ENCODE measurements at regions of chr17 and their contacts with region 1.

Region 1: DNA sequence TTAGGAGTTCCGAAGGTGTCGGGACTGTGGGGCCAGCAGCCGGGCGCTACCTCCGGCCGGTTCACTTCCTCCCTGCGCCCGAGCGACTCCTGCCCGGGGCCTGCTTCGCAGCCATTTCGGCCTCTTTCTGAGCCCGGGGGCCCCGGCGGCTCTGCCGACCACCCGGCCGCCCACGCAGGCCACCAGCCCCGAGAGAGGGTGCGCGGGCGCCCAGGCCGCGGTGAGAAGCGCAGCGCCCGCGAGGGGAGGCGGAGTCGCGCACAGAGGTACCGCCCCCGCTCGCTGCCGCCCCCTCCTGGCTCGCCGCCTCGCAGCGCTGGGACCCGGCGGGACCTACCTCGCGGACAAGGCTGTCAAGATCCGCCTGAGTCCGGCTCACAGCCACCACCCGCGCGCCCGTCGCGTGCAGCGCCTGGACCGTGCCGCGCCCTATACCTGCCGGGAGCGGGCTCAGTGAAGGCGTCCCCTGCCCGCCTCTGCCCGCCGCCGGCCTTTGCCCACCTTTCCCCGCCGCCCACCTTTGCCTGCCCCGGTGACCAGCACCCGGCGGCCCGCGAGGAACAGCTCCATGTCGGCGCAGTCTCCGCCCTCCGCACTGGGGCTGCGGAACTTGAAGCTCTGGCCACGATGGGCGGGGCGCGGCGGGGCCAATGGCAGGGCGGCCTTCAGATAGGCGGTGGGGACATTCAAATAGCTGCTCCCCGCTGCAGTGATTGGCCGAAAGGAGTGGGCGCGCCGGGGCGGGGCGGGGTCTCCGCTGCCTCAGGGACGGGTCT is at the start of gene DCXR:
- DNase-seq: peak; percentile 99
- ATAC-seq: peak; percentile 97
- H3K4me3 ChIP-seq: peak within 1 kb of the TSS; percentile 65
- H3K27ac ChIP-seq: peak within 1 kb of the TSS; percentile 95
- H3K4me1 ChIP-seq: peaks cover 13% of the 10 kb centered on the region
- H3K27me3 ChIP-seq: no peaks in the 10 kb centered on the region
- CTCF ChIP-seq: peak; percentile 77
- total RNA-seq, gene DCXR: 143 TPM

Region 2: DNA sequence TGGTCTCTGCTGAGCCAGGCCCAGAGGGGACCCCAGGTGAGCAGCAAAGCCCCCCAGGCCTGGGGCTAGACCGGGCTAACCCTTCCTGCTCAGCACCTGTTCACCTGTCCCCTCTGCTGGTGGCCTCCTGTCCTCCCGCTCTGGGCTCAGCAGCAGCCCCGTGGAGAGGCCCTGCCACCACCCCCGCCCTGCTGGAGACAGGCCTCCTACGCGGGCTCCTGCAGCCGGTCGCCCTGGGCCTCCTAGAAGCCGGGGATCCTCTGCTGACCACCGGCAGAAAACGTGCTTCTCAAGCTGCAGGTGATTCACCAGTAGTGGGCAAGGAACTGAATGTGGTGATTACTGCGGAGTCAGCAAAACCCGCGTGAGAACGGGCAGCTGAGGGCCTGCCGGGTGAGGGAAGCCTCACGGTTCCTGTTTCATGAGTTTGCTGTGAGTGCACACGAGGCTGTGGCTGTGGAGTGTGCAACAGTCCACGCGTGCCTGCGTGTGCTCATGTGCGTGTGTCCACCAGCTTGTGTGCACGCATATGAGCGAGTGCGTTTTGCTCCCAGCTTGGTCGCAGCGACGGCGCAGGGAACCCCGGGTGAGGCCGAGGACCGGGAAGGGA is 295.5 kb after region 1 on chr17:
- intact Hi-C with region 1: loop called (anchors 10 kb)
- DNase-seq: peak; percentile 77
- ATAC-seq: peak; percentile 66
- H3K4me3 ChIP-seq: peak overlapping the region; percentile 70
- H3K27ac ChIP-seq: peak overlapping the region; percentile 76
- H3K4me1 ChIP-seq: peaks cover 38% of the 10 kb centered on the region
- H3K27me3 ChIP-seq: no peaks in the 10 kb centered on the region
- CTCF ChIP-seq: no peak